ENCODE measurements at regions of chr9 and their contacts with region 1.

Region 1: DNA sequence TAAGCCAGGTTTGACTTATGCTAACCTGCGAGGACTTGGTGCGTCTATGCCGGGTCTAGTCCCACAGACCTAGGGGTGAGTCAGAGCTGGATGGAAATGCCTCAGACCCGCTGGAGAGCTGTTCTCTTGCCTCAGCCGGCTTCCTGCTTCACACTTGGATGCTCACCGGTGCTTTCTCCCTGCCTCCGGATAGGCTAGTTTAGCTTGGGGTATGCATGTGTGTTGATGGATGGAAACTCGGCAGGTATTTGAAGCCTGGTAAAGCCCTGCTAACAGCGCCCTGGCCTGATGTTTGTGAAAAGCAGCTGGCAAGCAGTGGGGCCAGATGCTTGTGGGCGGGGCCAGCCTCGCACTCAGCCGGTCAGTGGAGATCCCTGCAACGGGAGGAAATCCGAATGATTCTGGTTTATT is 29.3 kb downstream of the PRRC2B start:
- DNase-seq: peak; percentile 83
- H3K4me3 ChIP-seq: peak overlapping the region in 2 of 4 donors; percentile 9 to 10
- H3K27ac ChIP-seq: peak overlapping the region; percentile 68 to 84 (median 76)
- H3K4me1 ChIP-seq: peaks cover 0 to 71% (median 62%) of the 10 kb centered on the region in 4 donors
- H3K27me3 ChIP-seq: no peaks in the 10 kb centered on the region
- CTCF ChIP-seq: no peak
- EP300 ChIP-seq: no peak
- POLR2A ChIP-seq: no peak

Region 2: GRCh38 chr9:131478421-131478868 is 55.3 kb after region 1 on chr9:
- intact Hi-C with region 1: loop called (anchors 5 kb)
- DNase-seq: no peak
- H3K4me3 ChIP-seq: no peak overlapping the region
- H3K27ac ChIP-seq: no peak overlapping the region
- H3K4me1 ChIP-seq: peaks cover 0 to 23% (median 9%) of the 10 kb centered on the region in 4 donors
- H3K27me3 ChIP-seq: no peaks in the 10 kb centered on the region
- CTCF ChIP-seq: peak in 3 of 4 experiments; percentile 41 to 57 (median 43)
- EP300 ChIP-seq: no peak
- POLR2A ChIP-seq: no peak

Region 3: DNA sequence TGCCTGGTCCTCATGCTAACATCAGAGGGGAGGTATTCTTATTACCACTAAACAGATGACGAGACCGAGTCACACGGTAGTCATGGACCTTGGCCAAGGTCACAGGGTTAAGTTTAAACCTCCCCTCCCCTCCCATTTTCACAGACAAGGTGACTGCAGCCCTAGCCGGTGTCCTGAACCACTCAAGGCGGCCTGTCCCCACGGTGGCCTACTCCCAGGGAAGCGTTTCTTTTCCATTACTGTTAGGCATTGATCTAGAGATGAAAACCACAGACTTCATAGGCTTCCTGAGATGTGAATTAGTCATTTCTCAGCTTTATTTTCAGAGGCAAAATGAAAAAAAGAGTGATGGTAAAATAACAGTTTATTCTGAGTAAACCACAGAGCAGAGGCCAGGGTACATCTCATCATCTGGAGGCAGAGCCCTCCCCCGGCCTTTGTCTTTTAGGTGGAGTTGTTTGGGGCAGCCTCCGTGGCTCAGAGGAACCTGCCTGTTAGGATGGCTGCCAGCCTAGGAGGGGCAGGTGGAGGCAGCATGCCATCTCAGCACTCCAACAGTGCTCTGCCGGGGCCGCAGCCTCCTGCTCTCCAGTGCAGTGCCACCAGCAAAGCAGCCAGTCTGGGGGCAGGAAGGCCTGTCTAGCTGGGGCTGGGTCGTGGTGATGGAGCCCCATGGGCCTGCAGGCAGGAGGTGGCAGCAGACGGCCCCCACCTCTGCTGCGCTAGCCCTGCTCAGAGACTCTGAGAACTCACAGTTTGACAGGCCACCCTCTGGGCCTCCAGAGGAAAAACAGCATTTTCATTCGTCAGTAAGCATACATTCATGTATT is 245.5 kb after region 1 on chr9:
- intact Hi-C with region 1: no loop called
- DNase-seq: no peak
- H3K4me3 ChIP-seq: no peak overlapping the region
- H3K27ac ChIP-seq: peak overlapping the region; percentile 67 to 86 (median 80)
- H3K4me1 ChIP-seq: peaks cover 0 to 59% (median 45%) of the 10 kb centered on the region in 4 donors
- H3K27me3 ChIP-seq: no peaks in the 10 kb centered on the region
- CTCF ChIP-seq: no peak
- EP300 ChIP-seq: no peak
- POLR2A ChIP-seq: no peak